ENCODE measurements at regions of chr16 and their contacts with region 1.

Region 1: GRCh38 chr16:10729104-10730048 is 14.3 kb upstream of the NUBP1 start:
- DNase-seq: no peak
- H3K4me3 ChIP-seq: no peak overlapping the region
- H3K27ac ChIP-seq: no peak overlapping the region
- H3K4me1 ChIP-seq: no peaks in the 10 kb centered on the region
- H3K27me3 ChIP-seq: peaks cover 0 to 9% of the 10 kb centered on the region in 2 donors
- CTCF ChIP-seq: no peak

Region 2: GRCh38 chr16:10600533-10601443 is 128.6 kb before region 1 on chr16:
- intact Hi-C with region 1: loop called (anchors 5 kb)
- DNase-seq: no peak
- H3K4me3 ChIP-seq: no peak overlapping the region
- H3K27ac ChIP-seq: no peak overlapping the region
- H3K4me1 ChIP-seq: peaks cover 0 to 8% (median 0%) of the 10 kb centered on the region in 4 donors
- H3K27me3 ChIP-seq: peaks cover 0 to 25% of the 10 kb centered on the region in 2 donors
- CTCF ChIP-seq: no peak

Region 3: GRCh38 chr16:10652730-10653590 is 76.4 kb before region 1 on chr16:
- intact Hi-C with region 1: no loop called
- DNase-seq: no peak
- H3K4me3 ChIP-seq: no peak overlapping the region
- H3K27ac ChIP-seq: no peak overlapping the region
- H3K4me1 ChIP-seq: peaks cover 0 to 8% (median 0%) of the 10 kb centered on the region in 4 donors
- H3K27me3 ChIP-seq: peaks cover 0 to 8% of the 10 kb centered on the region in 2 donors
- CTCF ChIP-seq: no peak